PC-9 (cell line): ENCODE measurements at regions of chr20 and their contacts with region 1.

Region 1: DNA sequence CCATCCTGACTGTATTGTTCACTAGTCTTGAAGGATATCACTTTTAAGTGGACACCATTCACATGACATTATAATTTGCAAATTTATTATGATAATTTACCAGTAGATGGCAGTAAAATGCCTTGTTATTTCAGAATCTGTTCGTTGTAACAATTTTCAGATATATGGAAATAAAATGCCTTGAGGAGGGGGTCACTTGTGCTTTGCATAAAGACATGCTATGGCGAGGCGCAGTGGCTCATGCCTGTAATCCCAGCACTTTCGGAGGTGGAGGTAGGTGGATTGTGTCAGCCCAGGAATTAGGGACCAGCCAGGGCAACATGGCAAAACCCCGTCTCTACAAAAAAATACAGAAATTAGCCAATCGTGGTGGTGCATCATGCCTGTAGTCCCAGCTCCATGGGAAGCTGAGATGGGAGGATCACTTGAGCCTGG is 9.0 kb upstream of the NCOA6 start:
- DNase-seq: peak; percentile 10 to 52
- H3K4me3 ChIP-seq: no peak overlapping the region
- H3K27ac ChIP-seq: no peak overlapping the region
- H3K4me1 ChIP-seq: no peaks in the 10 kb centered on the region
- H3K27me3 ChIP-seq: no peaks in the 10 kb centered on the region
- CTCF ChIP-seq: peak; percentile 72

Region 2: DNA sequence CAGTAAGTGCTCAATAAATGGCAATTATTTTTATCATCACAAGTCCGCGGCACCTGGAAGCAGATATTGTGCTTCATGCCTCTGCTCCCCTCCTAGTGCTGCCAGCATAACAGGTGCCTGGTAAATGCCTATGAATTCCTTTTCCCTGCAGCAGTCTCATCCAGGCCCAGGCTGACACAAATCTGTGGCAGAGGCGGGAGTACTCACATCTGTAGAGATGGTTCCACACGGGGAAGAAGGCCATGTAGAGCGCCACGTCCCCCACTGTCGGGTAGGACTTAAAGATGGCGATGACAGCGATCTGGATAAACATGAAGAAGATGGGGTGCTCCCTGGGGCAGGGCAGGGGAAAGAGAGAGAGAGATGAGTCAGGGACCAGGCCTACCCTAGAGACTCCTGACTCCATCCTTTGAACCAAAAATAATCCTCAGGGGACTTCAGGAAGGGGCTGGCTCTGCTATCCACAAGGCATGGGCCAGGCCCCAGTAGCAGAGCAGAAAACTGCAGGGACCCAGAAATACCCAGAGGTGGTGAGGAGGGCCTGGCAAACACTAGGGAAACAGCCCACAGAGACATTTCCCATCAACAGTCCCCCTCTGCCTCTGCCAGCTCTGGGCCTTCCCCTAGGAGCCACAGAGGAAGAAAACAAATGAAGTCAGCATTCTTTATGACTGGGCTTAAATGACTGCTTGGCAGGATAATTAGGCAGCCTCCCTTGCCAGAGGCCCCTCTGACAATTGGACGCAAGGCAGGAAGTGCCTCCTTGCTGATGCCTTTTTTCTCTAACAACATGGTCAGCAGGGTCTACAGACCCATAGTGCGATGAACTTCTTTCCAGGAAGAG is 252.9 kb before region 1 on chr20:
- CTCF ChIA-PET with region 1: no interaction called
- POLR2A ChIA-PET with region 1: no interaction called
- intact Hi-C with region 1: no loop called
- DNase-seq: no peak
- H3K4me3 ChIP-seq: no peak overlapping the region
- H3K27ac ChIP-seq: no peak overlapping the region
- H3K4me1 ChIP-seq: peaks cover 31% of the 10 kb centered on the region
- H3K27me3 ChIP-seq: no peaks in the 10 kb centered on the region
- CTCF ChIP-seq: no peak

Region 3: GRCh38 chr20:34673411-34673810 is 161.1 kb before region 1 on chr20:
- CTCF ChIA-PET with region 1: no interaction called
- POLR2A ChIA-PET with region 1: no interaction called
- intact Hi-C with region 1: no loop called
- DNase-seq: no peak
- H3K4me3 ChIP-seq: no peak overlapping the region
- H3K27ac ChIP-seq: no peak overlapping the region
- H3K4me1 ChIP-seq: peaks cover 15% of the 10 kb centered on the region
- H3K27me3 ChIP-seq: no peaks in the 10 kb centered on the region
- CTCF ChIP-seq: no peak

Region 4: DNA sequence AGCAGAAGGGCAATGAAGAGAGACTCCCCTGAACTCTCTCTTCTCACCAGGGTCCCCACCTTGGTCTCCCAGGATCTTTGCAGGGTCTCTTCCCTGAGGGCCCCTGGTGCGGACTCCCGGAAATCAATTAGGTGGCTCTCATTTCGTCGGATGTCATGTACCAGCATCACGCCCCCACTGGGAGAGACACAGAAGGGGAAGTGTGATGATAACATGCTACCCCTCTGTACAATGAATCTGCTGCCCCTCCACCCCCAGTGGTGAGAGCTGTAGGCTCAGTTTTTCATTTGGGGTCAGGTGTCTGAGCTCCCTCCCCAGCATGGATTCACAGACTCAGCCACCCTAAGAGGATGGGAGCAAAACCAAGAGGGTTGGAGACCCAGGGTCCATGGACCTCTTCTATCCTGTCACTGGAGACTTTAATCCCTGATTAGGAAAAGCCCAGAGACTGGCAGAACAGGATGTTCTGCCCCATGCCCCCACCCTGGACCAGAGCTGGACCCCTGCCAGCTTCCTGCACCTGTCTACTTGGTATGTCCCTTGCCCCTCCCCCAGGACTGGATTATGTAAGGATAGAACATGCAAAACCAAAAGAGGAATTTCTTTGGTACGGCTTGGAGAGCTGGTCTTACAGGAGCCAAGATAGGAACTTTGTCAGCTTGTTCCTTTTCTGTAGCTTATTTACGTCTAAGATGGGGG is 27.1 kb after region 1 on chr20:
- CTCF ChIA-PET with region 1: no interaction called
- POLR2A ChIA-PET with region 1: no interaction called
- intact Hi-C with region 1: no loop called
- DNase-seq: peak; percentile 76 to 88
- H3K4me3 ChIP-seq: no peak overlapping the region
- H3K27ac ChIP-seq: no peak overlapping the region
- H3K4me1 ChIP-seq: peaks cover 21% of the 10 kb centered on the region
- H3K27me3 ChIP-seq: no peaks in the 10 kb centered on the region
- CTCF ChIP-seq: no peak

Region 5: DNA sequence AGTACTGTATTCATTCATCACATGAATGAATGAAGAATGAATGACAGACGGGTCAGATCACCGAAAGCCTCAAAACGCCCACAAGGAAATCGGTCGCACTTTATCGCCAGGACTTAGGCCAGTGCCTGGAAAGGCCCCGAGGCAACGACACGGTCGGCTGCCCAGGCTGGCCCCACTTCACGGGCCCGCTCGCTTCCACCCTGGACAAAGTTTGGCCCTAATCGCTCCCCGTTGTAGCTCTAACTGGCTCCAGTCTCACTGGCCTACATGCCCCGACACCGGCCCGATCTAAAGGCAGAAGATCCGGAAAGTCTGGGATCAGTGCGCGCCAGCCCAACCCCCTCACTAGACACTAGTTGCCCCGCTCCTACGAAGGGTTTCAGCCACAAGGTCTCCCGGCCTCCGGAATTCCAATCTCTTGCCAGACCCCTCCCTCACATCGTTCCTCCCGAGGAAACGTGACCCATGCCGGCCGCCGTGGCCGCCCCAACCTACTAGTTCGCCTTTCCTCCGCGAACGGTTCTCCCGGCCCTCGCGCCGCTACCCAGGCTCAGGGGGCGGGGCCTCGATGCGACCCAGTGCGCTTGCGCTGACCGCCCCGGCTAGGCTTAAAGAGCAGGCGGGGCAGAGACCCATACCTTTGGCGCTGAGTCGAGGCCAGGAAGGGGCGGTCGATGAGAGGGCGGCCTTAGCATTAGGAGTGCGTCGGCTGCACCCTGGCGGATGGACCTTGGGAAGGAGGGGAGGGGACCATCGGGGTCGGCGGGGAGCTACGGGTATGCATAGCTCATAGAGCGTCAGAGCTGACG is 121.0 kb after region 1 on chr20 and contains the starts of genes GSS and MYH7B:
- CTCF ChIA-PET with region 1: no interaction called
- POLR2A ChIA-PET with region 1: no interaction called
- intact Hi-C with region 1: loop called (anchors 5 kb)
- DNase-seq: peak; percentile 89 to 99
- H3K4me3 ChIP-seq: peak within 1 kb of the TSS; percentile 69
- H3K27ac ChIP-seq: peak within 1 kb of the TSS; percentile 87
- H3K4me1 ChIP-seq: peaks cover 40% of the 10 kb centered on the region
- H3K27me3 ChIP-seq: no peaks in the 10 kb centered on the region
- CTCF ChIP-seq: peak; percentile 61
- total RNA-seq, gene GSS: 131 and 138 TPM in 2 replicates
- total RNA-seq, gene MYH7B: 1.0 and 2.3 TPM in 2 replicates

Region 6: DNA sequence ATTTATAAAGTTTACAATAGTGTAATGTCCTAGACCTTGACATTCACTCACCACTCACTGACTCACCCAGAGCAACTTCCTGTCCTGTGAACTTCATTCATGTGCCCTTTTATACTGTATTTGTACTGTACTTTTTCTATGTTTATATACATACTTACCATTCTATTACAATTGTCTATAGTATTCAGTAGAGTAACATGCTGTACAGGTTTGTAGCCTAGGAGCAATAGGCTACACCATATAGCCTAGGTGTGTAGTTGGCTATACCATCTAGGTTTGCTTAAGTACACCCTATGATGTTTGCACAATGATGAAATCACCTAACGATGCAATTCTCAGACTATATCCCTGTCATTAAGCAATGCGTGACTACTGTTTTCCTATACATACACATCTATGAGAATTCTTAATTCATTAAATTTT is 295.2 kb after region 1 on chr20:
- CTCF ChIA-PET with region 1: interaction called, 12 read pairs
- POLR2A ChIA-PET with region 1: no interaction called
- intact Hi-C with region 1: no loop called
- DNase-seq: peak in 1 of 2 experiments; percentile 68
- H3K4me3 ChIP-seq: no peak overlapping the region
- H3K27ac ChIP-seq: peak overlapping the region; percentile 43
- H3K4me1 ChIP-seq: peaks cover 15% of the 10 kb centered on the region
- H3K27me3 ChIP-seq: no peaks in the 10 kb centered on the region
- CTCF ChIP-seq: no peak

Region 7: GRCh38 chr20:35207950-35208611 is 373.6 kb after region 1 on chr20:
- CTCF ChIA-PET with region 1: no interaction called
- POLR2A ChIA-PET with region 1: no interaction called
- intact Hi-C with region 1: loop called (anchors 1 kb)
- DNase-seq: peak; percentile 56 to 73
- H3K4me3 ChIP-seq: no peak overlapping the region
- H3K27ac ChIP-seq: no peak overlapping the region
- H3K4me1 ChIP-seq: no peaks in the 10 kb centered on the region
- H3K27me3 ChIP-seq: no peaks in the 10 kb centered on the region
- CTCF ChIP-seq: peak; percentile 85